ENCODE measurements at regions of chr17 and their contacts with region 1.

Region 1: GRCh38 chr17:3845621-3846441 is at the start of gene NCBP3:
- DNase-seq: peak; percentile 96
- ATAC-seq: peak; percentile 97
- H3K4me3 ChIP-seq: peak within 1 kb of the TSS; percentile 54 to 96 (median 90)
- H3K4me3 Mint-ChIP-seq: peak within 1 kb of the TSS; percentile 92
- H3K27ac ChIP-seq: peak within 1 kb of the TSS; percentile 72 to 94
- H3K27ac Mint-ChIP-seq: peak within 1 kb of the TSS; percentile 86
- H3K4me1 ChIP-seq: peaks cover 10 to 20% of the 10 kb centered on the region in 2 donors
- H3K4me1 Mint-ChIP-seq: peaks cover 23% of the 10 kb centered on the region
- H3K27me3 ChIP-seq: no peaks in the 10 kb centered on the region
- H3K27me3 Mint-ChIP-seq: no peaks in the 10 kb centered on the region
- CTCF ChIP-seq: peak; percentile 90
- total RNA-seq, gene NCBP3: 70.7 and 71.7 TPM in 2 replicates

Region 2: DNA sequence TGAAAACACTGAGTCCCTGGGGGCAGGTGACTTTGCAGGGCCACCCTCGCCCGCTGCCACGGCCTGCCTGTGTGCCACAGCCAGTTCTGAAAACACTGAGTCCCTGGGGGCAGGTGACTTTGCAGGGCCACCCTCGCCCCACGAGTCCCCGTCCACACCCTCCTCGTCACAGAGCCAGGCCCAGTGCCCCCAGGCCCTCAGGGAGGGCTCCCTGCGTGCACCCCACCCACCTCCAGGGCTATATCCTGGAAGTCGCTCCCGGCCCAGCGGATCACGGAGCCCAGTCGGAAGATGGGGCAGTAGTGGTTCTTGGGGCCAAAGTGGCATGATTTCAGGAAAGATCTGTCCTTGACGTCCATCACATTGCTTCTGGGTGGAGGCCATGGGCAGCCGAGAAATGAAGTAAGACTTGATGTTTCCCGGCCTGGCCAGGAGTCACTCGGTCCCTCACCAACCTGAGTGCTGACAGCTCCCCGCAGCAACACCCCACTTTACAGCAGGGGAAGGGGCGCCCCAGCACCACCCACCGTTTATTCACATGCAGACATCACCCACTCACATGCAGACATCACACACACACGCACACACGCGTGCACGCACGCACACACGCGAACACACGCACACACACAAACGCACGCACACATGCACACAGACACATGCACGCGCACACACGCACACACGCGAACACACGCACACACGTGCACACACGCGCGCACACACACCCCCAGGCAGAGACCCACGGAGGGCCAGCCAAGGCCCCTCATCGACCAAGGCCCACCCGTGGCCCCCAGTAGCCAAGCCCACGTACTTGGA is 156.4 kb before region 1 on chr17:
- CTCF ChIA-PET with region 1: no interaction called
- POLR2A ChIA-PET with region 1: no interaction called
- intact Hi-C with region 1: no loop called
- DNase-seq: peak; percentile 56
- ATAC-seq: no peak
- H3K4me3 ChIP-seq: peak overlapping the region in 2 of 5 experiments; percentile 24
- H3K4me3 Mint-ChIP-seq: peak overlapping the region; percentile 78
- H3K27ac ChIP-seq: peak overlapping the region; percentile 49 to 58
- H3K27ac Mint-ChIP-seq: peak overlapping the region; percentile 94
- H3K4me1 ChIP-seq: peaks cover 58 to 71% of the 10 kb centered on the region in 2 donors
- H3K4me1 Mint-ChIP-seq: peaks cover 64% of the 10 kb centered on the region
- H3K27me3 ChIP-seq: no peaks in the 10 kb centered on the region
- H3K27me3 Mint-ChIP-seq: no peaks in the 10 kb centered on the region
- CTCF ChIP-seq: no peak

Region 3: GRCh38 chr17:3738562-3739295 is 107.1 kb before region 1 on chr17:
- CTCF ChIA-PET with region 1: interaction called, 101 read pairs
- POLR2A ChIA-PET with region 1: interaction called, 6 read pairs
- intact Hi-C with region 1: no loop called
- DNase-seq: peak; percentile 44
- ATAC-seq: peak; percentile 44
- H3K4me3 ChIP-seq: no peak overlapping the region
- H3K4me3 Mint-ChIP-seq: no peak overlapping the region
- H3K27ac ChIP-seq: no peak overlapping the region
- H3K27ac Mint-ChIP-seq: peak overlapping the region; percentile 43
- H3K4me1 ChIP-seq: peaks cover 7 to 32% of the 10 kb centered on the region in 2 donors
- H3K4me1 Mint-ChIP-seq: peaks cover 38% of the 10 kb centered on the region
- H3K27me3 ChIP-seq: no peaks in the 10 kb centered on the region
- H3K27me3 Mint-ChIP-seq: no peaks in the 10 kb centered on the region
- CTCF ChIP-seq: no peak

Region 4: GRCh38 chr17:3835410-3836229 is 10.2 kb before region 1 on chr17:
- CTCF ChIA-PET with region 1: interaction called, 18 read pairs
- POLR2A ChIA-PET with region 1: no interaction called
- intact Hi-C with region 1: no loop called
- DNase-seq: no peak
- ATAC-seq: no peak
- H3K4me3 ChIP-seq: no peak overlapping the region
- H3K4me3 Mint-ChIP-seq: no peak overlapping the region
- H3K27ac ChIP-seq: no peak overlapping the region
- H3K27ac Mint-ChIP-seq: no peak overlapping the region
- H3K4me1 ChIP-seq: no peaks in the 10 kb centered on the region
- H3K4me1 Mint-ChIP-seq: peaks cover 2% of the 10 kb centered on the region
- H3K27me3 ChIP-seq: no peaks in the 10 kb centered on the region
- H3K27me3 Mint-ChIP-seq: no peaks in the 10 kb centered on the region
- CTCF ChIP-seq: no peak

Region 5: DNA sequence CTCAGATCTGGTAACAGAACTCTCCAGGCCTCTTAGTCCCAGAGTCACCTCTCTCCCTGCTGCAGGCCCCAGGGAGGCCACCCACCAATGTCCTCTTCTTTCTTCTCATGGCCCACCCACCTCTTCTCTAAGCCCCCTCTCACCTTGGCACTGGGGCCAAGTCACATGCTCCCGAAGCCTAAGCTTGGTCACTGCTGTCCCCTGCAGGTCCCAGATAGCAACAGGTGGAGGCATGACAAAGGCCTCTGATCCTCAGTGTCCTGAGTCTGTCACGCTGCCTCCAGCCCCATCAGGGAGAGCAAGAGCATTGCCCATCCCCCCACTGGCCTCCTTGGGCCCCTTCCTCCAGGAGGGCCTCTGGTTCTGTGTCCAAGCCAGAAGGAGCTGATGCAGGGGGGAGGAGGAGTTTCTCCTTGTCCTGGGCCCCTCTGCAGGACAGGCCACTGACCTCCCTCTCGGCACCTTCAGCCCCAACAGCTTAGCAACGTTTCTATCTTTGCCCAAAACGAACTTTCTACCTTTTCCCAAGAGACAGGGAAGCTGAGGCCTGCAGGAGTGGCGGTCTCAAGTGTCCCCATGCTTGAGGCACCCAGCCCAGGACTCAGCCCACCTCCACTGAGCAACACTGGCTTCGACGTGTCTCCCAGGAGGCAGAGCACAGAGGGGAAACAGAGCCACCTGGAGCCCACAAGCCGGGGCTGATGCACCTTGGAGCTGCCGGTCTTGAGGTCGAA is 61.8 kb after region 1 on chr17:
- CTCF ChIA-PET with region 1: interaction called, 23 read pairs
- POLR2A ChIA-PET with region 1: no interaction called
- intact Hi-C with region 1: loop called (anchors 2 kb)
- DNase-seq: no peak
- ATAC-seq: no peak
- H3K4me3 ChIP-seq: no peak overlapping the region
- H3K4me3 Mint-ChIP-seq: no peak overlapping the region
- H3K27ac ChIP-seq: no peak overlapping the region
- H3K27ac Mint-ChIP-seq: peak overlapping the region; percentile 53
- H3K4me1 ChIP-seq: peaks cover 42 to 56% of the 10 kb centered on the region in 2 donors
- H3K4me1 Mint-ChIP-seq: peaks cover 54% of the 10 kb centered on the region
- H3K27me3 ChIP-seq: no peaks in the 10 kb centered on the region
- H3K27me3 Mint-ChIP-seq: no peaks in the 10 kb centered on the region
- CTCF ChIP-seq: no peak

Region 6: GRCh38 chr17:4074831-4075495 is 229.1 kb after region 1 on chr17:
- CTCF ChIA-PET with region 1: interaction called, 56 read pairs
- POLR2A ChIA-PET with region 1: interaction called, 3 read pairs
- intact Hi-C with region 1: loop called (anchors 1 kb)
- DNase-seq: peak; percentile 75
- ATAC-seq: peak; percentile 53
- H3K4me3 ChIP-seq: no peak overlapping the region
- H3K4me3 Mint-ChIP-seq: peak overlapping the region; percentile 75
- H3K27ac ChIP-seq: peak overlapping the region; percentile 20 to 54
- H3K27ac Mint-ChIP-seq: peak overlapping the region; percentile 76
- H3K4me1 ChIP-seq: peaks cover 13 to 17% of the 10 kb centered on the region in 2 donors
- H3K4me1 Mint-ChIP-seq: peaks cover 18% of the 10 kb centered on the region
- H3K27me3 ChIP-seq: no peaks in the 10 kb centered on the region
- H3K27me3 Mint-ChIP-seq: no peaks in the 10 kb centered on the region
- CTCF ChIP-seq: peak; percentile 78

Measured in B cell (primary cell).